Calu3 (cell line): ENCODE measurements at regions of chr4 and their contacts with region 1.

Region 1: DNA sequence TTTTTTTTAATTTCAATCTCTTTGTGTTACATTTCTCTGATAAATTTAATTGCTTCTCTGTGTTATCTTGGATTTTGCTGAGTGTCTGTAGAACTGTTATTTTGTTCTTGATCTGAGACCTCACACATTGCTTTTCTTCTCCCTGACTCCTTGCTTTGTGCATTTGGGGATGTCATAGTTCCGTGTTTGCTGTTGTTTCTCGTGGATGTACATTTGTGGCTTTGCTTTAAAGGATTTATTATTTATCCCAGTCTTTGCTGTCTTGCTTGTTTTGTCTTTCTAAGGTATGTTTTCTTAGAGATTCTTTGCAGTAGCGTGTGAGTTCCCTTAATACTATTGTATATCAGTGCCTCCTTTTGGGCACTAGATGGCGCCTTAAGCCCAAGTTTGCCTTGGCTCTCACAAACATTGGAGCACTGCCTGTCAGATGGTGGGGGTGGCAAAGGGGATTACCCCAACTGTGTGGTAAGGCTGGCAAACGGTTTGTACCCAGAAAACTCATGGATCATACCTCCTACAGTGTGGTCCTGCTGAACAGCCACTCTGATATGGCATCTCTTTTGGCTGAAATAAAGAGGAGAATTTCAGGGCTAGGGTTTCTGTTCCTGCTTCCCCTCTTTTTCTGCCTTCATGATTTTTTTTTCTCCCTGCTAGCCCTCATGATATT is 96.4 kb downstream of the PGRMC2 start:
- DNase-seq: peak; percentile 51
- H3K4me3 Mint-ChIP-seq: no peak overlapping the region
- H3K27ac Mint-ChIP-seq: no peak overlapping the region
- H3K4me1 Mint-ChIP-seq: peaks cover 8% of the 10 kb centered on the region
- H3K27me3 Mint-ChIP-seq: no peaks in the 10 kb centered on the region
- CTCF ChIP-seq: peak; percentile 58

Region 2: GRCh38 chr4:128287871-128288688 is 96.8 kb after region 1 on chr4:
- CTCF ChIA-PET with region 1: no interaction called
- intact Hi-C with region 1: loop called (anchors 1 kb)
- DNase-seq: peak; percentile 97
- H3K4me3 Mint-ChIP-seq: peak overlapping the region; percentile 78
- H3K27ac Mint-ChIP-seq: peak overlapping the region; percentile 89
- H3K4me1 Mint-ChIP-seq: peaks cover 15% of the 10 kb centered on the region
- H3K27me3 Mint-ChIP-seq: no peaks in the 10 kb centered on the region
- CTCF ChIP-seq: no peak

Region 3: DNA sequence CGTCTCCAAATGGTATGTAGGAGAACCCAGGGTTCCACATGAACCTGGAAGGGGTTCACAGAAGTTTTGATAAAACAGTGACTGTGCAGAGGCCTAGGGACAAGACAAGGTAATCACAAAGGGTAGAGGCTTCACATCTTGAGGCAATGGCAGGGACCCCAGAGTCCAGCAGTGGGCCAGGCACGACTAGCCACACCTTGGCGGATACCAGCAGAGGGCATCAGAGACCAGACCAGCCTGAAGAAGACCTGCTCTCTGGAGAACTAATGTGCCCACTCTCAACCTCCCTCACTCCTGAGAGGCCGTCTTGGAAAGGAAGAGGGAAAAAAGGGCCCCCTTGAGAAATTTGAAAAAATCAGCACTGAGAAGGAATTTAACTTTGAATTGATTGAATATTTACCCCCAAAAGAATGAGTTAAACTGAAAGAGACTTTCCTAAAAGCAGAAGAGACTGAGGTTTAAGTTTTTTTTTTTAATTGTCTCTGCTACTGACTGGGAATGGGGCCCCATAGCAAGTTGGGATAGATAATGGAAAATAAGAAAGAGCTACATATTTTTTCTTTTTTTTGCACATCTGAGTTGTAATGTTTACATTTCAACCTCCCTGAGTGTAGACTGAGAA is 374.4 kb after region 1 on chr4:
- CTCF ChIA-PET with region 1: no interaction called
- intact Hi-C with region 1: loop called (anchors 5 kb)
- DNase-seq: peak; percentile 75
- H3K4me3 Mint-ChIP-seq: no peak overlapping the region
- H3K27ac Mint-ChIP-seq: no peak overlapping the region
- H3K4me1 Mint-ChIP-seq: peaks cover 41% of the 10 kb centered on the region
- H3K27me3 Mint-ChIP-seq: no peaks in the 10 kb centered on the region
- CTCF ChIP-seq: peak; percentile 49

Region 4: GRCh38 chr4:128615197-128615596 is 423.9 kb after region 1 on chr4:
- CTCF ChIA-PET with region 1: no interaction called
- intact Hi-C with region 1: no loop called
- DNase-seq: no peak
- H3K4me3 Mint-ChIP-seq: no peak overlapping the region
- H3K27ac Mint-ChIP-seq: no peak overlapping the region
- H3K4me1 Mint-ChIP-seq: no peaks in the 10 kb centered on the region
- H3K27me3 Mint-ChIP-seq: no peaks in the 10 kb centered on the region
- CTCF ChIP-seq: no peak